ENCODE measurements at regions of chr2 and their contacts with region 1.

Region 1: GRCh38 chr2:119659601-119660342 is 19.2 kb upstream of the TMEM177 start:
- DNase-seq: no peak
- H3K4me3 Mint-ChIP-seq: no peak overlapping the region
- H3K27ac Mint-ChIP-seq: no peak overlapping the region
- H3K4me1 Mint-ChIP-seq: peaks cover 4% of the 10 kb centered on the region
- H3K27me3 Mint-ChIP-seq: peaks cover 9% of the 10 kb centered on the region

Region 2: GRCh38 chr2:119641562-119642258 is 18.1 kb before region 1 on chr2:
- intact Hi-C with region 1: loop called (anchors 2 kb)
- DNase-seq: peak; percentile 56
- H3K4me3 Mint-ChIP-seq: no peak overlapping the region
- H3K27ac Mint-ChIP-seq: no peak overlapping the region
- H3K4me1 Mint-ChIP-seq: peaks cover 2% of the 10 kb centered on the region
- H3K27me3 Mint-ChIP-seq: peaks cover 15% of the 10 kb centered on the region